ENCODE measurements at regions of chr10 and their contacts with region 1.

Region 1: GRCh38 chr10:114388275-114388674 is 16.0 kb downstream of the AFAP1L2 start:
- DNase-seq: peak; percentile 31
- ATAC-seq: peak; percentile 33
- H3K4me3 Mint-ChIP-seq: no peak overlapping the region
- H3K27ac Mint-ChIP-seq: peak overlapping the region; percentile 9
- H3K4me1 Mint-ChIP-seq: peaks cover 15% of the 10 kb centered on the region
- H3K27me3 Mint-ChIP-seq: no peaks in the 10 kb centered on the region

Region 2: GRCh38 chr10:114403541-114404161 is 15.4 kb after region 1 on chr10:
- CTCF ChIA-PET with region 1: interaction called, 10 read pairs
- POLR2A ChIA-PET with region 1: interaction called, 3 read pairs
- DNase-seq: no peak
- ATAC-seq: peak; percentile 53
- H3K4me3 Mint-ChIP-seq: peak overlapping the region; percentile 55
- H3K27ac Mint-ChIP-seq: no peak overlapping the region
- H3K4me1 Mint-ChIP-seq: peaks cover 8% of the 10 kb centered on the region
- H3K27me3 Mint-ChIP-seq: peaks cover 57% of the 10 kb centered on the region

Measured in activated CD8-positive, alpha-beta T cell treated with anti-CD3 and anti-CD28 coated beads, Interleukin-2, amount 10 ng/mL, durations not matched to agents 7 days and 5 days (primary cell).